PC-9 (cell line): ENCODE measurements at regions of chr14 and their contacts with region 1.

Region 1: DNA sequence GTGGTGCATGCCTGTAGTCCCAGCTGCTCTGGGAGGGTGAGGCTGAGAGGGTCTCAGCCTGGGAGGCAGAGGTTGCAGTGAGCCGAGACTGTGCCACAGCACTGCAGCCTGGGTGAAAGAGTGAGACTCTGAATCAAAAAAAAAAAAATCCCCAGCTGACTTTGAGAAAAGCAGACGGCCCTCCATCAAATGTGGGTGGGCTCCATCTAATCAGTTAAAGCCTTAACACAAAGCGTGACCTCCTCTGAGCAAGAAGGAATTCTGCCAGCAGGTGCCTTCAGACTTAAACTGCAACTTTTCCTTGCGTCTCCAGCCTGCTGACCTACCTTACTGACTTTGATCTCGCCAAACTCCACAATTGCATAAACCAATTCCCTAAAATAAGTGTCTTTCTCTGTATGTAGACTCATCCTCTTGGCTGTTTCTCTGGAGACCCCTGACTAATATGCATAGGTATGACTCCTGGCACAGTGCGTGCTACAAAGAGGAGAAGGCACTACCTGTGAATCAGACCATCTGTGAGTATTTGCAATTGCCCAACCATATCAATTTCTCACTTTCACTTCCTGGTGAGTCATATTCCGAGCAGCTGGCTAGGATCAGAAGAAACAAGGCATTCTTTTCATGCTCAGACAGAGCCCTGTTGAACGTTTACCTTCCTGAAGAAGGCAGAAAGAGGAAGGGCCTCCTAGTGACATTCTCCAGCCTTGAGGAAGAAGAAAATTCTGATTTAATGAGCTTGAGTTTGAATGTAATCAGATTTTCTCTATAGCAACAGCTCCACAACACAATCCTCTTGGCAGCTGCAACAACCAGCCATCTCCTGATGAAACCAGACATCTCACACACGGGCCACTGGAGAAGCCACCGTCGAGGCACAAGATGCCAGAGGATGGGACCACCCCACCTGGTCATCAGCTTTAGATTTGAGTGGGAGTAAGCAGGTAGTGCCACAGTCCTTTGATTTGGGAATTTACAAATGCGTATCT is 54.3 kb downstream of the CLMN start:
- DNase-seq: peak; percentile 52 to 99
- H3K4me3 ChIP-seq: peak overlapping the region; percentile 19; the same call in 1 of the 2 replicates
- H3K27ac ChIP-seq: peak overlapping the region; percentile 98
- H3K4me1 ChIP-seq: peaks cover 25% of the 10 kb centered on the region
- H3K27me3 ChIP-seq: no peaks in the 10 kb centered on the region
- CTCF ChIP-seq: no peak

Region 2: GRCh38 chr14:95196290-95196689 is 69.1 kb before region 1 on chr14:
- CTCF ChIA-PET with region 1: no interaction called
- POLR2A ChIA-PET with region 1: interaction called, 5 read pairs
- intact Hi-C with region 1: loop called (anchors 2 kb)
- DNase-seq: no peak
- H3K4me3 ChIP-seq: no peak overlapping the region
- H3K27ac ChIP-seq: no peak overlapping the region
- H3K4me1 ChIP-seq: peaks cover 18% of the 10 kb centered on the region
- H3K27me3 ChIP-seq: no peaks in the 10 kb centered on the region
- CTCF ChIP-seq: no peak

Region 3: GRCh38 chr14:95206534-95206933 is 58.9 kb before region 1 on chr14:
- CTCF ChIA-PET with region 1: no interaction called
- POLR2A ChIA-PET with region 1: no interaction called
- intact Hi-C with region 1: no loop called
- DNase-seq: no peak
- H3K4me3 ChIP-seq: no peak overlapping the region
- H3K27ac ChIP-seq: no peak overlapping the region
- H3K4me1 ChIP-seq: no peaks in the 10 kb centered on the region
- H3K27me3 ChIP-seq: no peaks in the 10 kb centered on the region
- CTCF ChIP-seq: no peak

Region 4: DNA sequence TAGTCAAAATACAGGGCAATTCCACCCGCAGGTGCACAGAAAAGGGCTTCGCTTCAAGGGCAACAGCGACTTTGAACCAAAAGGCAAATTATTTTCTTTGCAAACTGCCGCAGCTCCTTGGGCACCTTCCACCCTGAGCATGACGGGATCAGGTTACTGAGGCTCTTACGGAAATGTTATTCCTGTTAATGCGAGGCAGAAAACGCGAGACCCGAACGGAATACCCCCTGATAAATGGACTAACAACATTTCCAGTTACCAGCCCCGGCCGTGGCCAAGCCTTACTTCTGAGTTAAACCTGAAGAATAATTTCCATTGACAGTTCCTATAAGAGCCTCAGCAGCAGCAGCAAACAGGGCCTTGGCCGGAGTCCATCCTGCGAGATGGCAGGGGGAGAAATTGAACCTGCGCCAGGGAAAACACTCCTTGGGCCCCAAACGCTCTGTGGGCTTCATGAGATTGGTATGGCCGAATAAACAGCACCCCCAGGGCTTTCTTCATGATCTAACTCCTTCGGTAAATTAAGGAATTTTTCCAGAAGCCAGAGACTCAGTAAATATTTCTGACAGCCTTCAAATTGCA is 38.0 kb before region 1 on chr14:
- CTCF ChIA-PET with region 1: no interaction called
- POLR2A ChIA-PET with region 1: no interaction called
- intact Hi-C with region 1: no loop called
- DNase-seq: no peak
- H3K4me3 ChIP-seq: no peak overlapping the region
- H3K27ac ChIP-seq: no peak overlapping the region
- H3K4me1 ChIP-seq: peaks cover 5% of the 10 kb centered on the region
- H3K27me3 ChIP-seq: no peaks in the 10 kb centered on the region
- CTCF ChIP-seq: no peak

Region 5: DNA sequence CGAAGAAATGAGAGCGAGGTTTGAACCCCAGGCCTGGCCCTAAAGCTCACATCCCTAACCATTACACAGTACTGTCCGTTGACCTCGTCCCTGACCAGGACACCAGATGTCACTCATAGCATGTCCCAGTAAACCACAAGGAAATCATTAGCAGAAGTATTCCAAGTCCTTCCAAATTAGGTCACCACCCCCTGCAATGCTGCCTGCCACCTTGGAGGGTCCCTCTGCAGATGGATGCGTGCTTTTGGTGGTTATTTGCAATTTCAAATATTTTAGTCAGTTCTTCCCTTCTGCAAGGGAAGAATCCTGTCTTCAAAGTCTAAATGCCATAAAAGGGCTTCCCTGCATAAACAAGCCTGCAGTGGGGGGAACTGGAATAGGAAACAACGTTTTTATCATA is 17.0 kb before region 1 on chr14:
- CTCF ChIA-PET with region 1: no interaction called
- POLR2A ChIA-PET with region 1: no interaction called
- intact Hi-C with region 1: loop called (anchors 1 kb)
- DNase-seq: no peak
- H3K4me3 ChIP-seq: no peak overlapping the region
- H3K27ac ChIP-seq: peak overlapping the region; percentile 51
- H3K4me1 ChIP-seq: peaks cover 18% of the 10 kb centered on the region
- H3K27me3 ChIP-seq: no peaks in the 10 kb centered on the region
- CTCF ChIP-seq: no peak

Region 6: GRCh38 chr14:95291859-95292542 is 26.6 kb after region 1 on chr14:
- CTCF ChIA-PET with region 1: no interaction called
- POLR2A ChIA-PET with region 1: no interaction called
- intact Hi-C with region 1: loop called (anchors 1 kb)
- DNase-seq: no peak
- H3K4me3 ChIP-seq: no peak overlapping the region
- H3K27ac ChIP-seq: no peak overlapping the region
- H3K4me1 ChIP-seq: peaks cover 11% of the 10 kb centered on the region; the same call in 1 of the 2 replicates
- H3K27me3 ChIP-seq: no peaks in the 10 kb centered on the region
- CTCF ChIP-seq: no peak